ENCODE measurements at regions of chr2 and their contacts with region 1.

Region 1: DNA sequence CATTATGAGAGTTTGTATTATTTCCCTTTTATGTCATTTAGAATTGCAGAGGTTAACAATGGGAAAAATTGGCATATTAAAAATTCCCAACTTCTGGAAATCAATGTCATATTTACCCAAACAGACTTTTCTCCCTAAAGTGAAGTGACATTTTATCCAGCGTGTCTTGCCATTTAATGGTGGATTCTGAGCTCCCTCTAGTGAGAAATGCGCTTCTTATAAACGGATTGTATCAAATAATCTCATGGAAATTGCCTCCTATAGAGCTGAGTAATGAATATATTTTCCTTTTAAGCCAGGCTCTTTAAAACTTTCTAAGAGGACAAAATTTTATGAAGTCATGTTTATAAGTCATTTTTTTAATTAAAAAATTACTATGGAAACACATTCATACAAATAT is 5.7 kb upstream of the GCFC2 start:
- DNase-seq: peak in 1 of 2 experiments; percentile 37
- ATAC-seq: peak in 1 of 2 experiments; percentile 60; a peak in 2 of 6 replicates
- H3K4me3 ChIP-seq: no peak overlapping the region
- H3K27ac ChIP-seq: no peak overlapping the region
- H3K4me1 ChIP-seq: 0 out of 3 replicates have a peak, but pooled peaks cover 2% of the 10 kb centered on the region
- CTCF ChIP-seq: peak; percentile 39
- EP300 ChIP-seq: no peak
- POLR2A ChIP-seq: no peak
- RAD21 ChIP-seq: peak in 1 of 2 experiments; percentile 45; a peak in 3 of 5 replicates

Region 2: DNA sequence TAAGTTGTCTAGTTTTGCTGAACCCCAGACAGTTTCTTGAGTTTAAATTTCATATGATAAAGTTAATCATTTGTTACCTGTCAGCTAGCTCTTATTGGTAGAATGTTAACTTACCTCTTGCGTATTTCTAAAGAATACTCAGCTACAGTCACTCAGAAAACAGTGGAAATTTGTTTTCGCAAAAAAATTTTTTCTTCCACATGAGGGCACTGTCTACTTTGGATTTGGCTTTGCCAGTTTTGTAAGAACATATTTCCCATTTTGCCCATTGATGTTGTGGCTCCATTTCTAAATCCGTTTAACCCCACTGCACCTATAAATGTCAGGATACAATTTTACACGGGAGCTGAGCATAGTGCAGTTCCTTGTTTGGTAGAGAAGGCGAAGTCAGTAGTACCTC is 13.5 kb after region 1 on chr2:
- CTCF ChIA-PET with region 1: interaction called, 12 read pairs
- POLR2A ChIA-PET with region 1: no interaction called
- DNase-seq: peak in 1 of 2 experiments; percentile 23
- ATAC-seq: peak; percentile 52 to 60; a peak in 3 of 6 replicates
- H3K4me3 ChIP-seq: no peak overlapping the region
- H3K27ac ChIP-seq: no peak overlapping the region
- H3K4me1 ChIP-seq: no peaks in the 10 kb centered on the region
- CTCF ChIP-seq: peak; percentile 55
- EP300 ChIP-seq: no peak
- POLR2A ChIP-seq: no peak
- RAD21 ChIP-seq: peak; percentile 62 to 63

Region 3: GRCh38 chr2:75751360-75751759 is 35.0 kb after region 1 on chr2:
- CTCF ChIA-PET with region 1: no interaction called
- POLR2A ChIA-PET with region 1: no interaction called
- DNase-seq: no peak
- ATAC-seq: no peak
- H3K4me3 ChIP-seq: no peak overlapping the region
- H3K27ac ChIP-seq: no peak overlapping the region
- H3K4me1 ChIP-seq: no peaks in the 10 kb centered on the region
- CTCF ChIP-seq: no peak
- EP300 ChIP-seq: no peak
- POLR2A ChIP-seq: no peak
- RAD21 ChIP-seq: no peak